ENCODE measurements at regions of chr1 and their contacts with region 1.

Region 1: DNA sequence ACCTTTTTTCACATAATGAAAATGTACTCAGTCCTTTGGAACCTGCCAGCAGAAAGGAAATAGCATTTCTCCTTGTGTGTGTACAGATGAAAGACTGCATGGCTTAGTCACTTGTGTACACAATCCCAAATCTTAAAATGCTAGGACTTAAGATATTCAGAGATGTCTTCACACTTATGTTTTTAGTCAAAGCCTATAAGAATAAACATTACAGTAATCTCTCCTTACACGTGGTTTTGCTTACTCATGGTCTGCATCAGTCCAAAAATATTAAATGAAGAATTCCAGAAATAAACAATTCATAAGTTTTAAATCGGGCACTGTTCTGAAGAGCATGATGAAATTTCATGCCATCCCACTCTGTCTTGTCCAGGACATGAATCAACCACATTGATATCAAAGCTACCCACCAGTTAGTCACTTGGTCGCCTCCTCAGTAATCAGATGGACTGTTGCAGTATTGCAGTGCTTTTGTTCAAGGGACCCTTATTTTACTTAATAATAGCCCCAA is 75.7 kb upstream of the RRP15 start:
- DNase-seq: no peak
- ATAC-seq: no peak
- H3K4me3 ChIP-seq: no peak overlapping the region
- H3K27ac ChIP-seq: no peak overlapping the region
- H3K4me1 ChIP-seq: no peaks in the 10 kb centered on the region
- H3K27me3 ChIP-seq: 0 out of 5 replicates have a peak, but pooled peaks cover 0 to 3% of the 10 kb centered on the region in 2 experiments
- CTCF ChIP-seq: no peak
- EP300 ChIP-seq: no peak
- POLR2A ChIP-seq: no peak
- RAD21 ChIP-seq: no peak

Region 2: DNA sequence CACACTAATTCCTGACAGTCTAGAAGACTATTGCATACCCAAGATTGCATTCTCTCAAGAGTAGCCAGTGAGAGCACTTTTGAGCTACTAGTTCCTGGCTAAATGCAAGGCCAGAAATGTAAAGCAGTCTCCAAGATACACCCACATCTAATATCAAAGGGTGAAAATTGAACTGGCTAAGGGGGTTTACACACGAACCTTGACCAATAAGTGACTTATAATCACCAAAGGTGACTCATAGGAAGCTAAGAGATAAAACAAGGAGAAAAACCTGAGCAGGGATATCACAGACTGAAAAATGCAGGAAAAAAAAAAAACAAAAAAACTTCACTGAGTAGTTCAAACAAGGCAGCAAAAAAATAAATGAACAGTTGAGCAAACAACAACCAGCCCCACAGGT is 96.5 kb before region 1 on chr1:
- CTCF ChIA-PET with region 1: no interaction called
- POLR2A ChIA-PET with region 1: no interaction called
- in situ Hi-C with region 1: no loop called
- intact Hi-C with region 1: no loop called
- DNase-seq: no peak
- ATAC-seq: no peak
- H3K4me3 ChIP-seq: no peak overlapping the region
- H3K27ac ChIP-seq: no peak overlapping the region
- H3K4me1 ChIP-seq: no peaks in the 10 kb centered on the region
- H3K27me3 ChIP-seq: no peaks in the 10 kb centered on the region
- CTCF ChIP-seq: no peak
- EP300 ChIP-seq: no peak
- POLR2A ChIP-seq: no peak
- RAD21 ChIP-seq: no peak

Region 3: GRCh38 chr1:218171285-218171893 is 38.0 kb before region 1 on chr1:
- CTCF ChIA-PET with region 1: no interaction called
- POLR2A ChIA-PET with region 1: no interaction called
- in situ Hi-C with region 1: no loop called
- intact Hi-C with region 1: loop called (anchors 1 kb)
- DNase-seq: peak; percentile 12
- ATAC-seq: no peak
- H3K4me3 ChIP-seq: no peak overlapping the region
- H3K27ac ChIP-seq: no peak overlapping the region
- H3K4me1 ChIP-seq: no peaks in the 10 kb centered on the region
- H3K27me3 ChIP-seq: peaks cover 0 to 3% of the 10 kb centered on the region in 2 experiments; a peak in 2 of 5 replicates
- CTCF ChIP-seq: peak; percentile 58
- EP300 ChIP-seq: no peak
- POLR2A ChIP-seq: no peak
- RAD21 ChIP-seq: peak; percentile 39; the same call in 1 of the 2 replicates